ENCODE measurements at regions of chr13 and their contacts with region 1.

Region 1: DNA sequence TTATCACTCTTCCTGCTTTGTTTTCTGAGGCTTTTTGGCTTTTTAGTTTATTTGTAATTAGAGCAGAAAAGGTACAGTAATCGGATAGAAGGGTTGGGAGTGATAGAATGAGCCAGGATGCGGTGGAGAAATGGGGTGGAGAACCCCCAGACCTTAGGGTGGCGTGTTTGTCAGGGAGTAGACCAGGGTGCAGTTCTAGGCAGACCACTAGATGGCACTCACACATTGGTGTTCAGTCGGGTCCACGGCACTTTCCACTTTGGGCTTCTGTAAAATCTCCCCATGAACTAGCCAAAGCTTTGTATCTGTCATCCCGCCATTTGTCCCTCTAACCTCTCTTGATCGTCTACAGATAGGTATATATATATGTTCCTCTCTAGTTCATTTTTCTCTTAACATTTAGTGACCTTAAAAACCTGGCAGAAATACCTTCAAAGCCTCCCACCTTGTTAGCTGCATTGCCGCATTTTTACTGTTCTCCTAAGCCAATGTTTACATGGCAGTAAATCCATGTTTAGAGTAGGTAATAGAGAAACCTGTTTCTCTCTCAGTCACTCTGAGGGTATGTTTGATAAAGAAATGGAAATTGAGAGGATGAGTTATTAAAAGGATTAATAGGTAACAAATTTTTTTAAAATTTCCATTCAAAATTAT is 154.9 kb downstream of the TM9SF2 start:
- DNase-seq: peak; percentile 85
- H3K4me3 ChIP-seq: no peak overlapping the region
- H3K27ac ChIP-seq: no peak overlapping the region
- H3K4me1 ChIP-seq: peaks cover 0 to 11% (median 8%) of the 10 kb centered on the region in 4 donors
- H3K27me3 ChIP-seq: no peaks in the 10 kb centered on the region
- CTCF ChIP-seq: peak; percentile 78 to 92 (median 85)
- EP300 ChIP-seq: no peak
- POLR2A ChIP-seq: no peak

Region 2: DNA sequence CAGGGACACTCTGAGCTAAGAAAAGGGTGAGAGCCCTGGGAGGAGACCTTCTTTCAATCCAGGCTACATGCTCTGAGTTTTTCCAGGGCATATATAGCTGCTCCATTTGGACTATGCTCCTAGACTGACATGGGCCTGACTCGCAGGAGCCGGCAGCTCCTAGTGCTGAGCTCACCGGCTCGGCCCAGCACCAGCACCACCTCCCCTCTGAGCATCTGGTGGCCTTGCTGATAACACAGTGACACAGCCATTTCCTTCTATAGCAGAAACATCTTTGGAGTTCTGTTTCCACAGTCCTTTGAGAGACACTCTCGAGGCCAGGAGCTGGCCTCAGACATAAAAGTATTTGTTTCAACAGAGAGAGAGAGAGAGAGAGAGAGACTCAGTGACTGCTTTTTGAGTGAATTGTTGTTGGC is 29.9 kb after region 1 on chr13:
- intact Hi-C with region 1: no loop called
- DNase-seq: no peak
- H3K4me3 ChIP-seq: no peak overlapping the region
- H3K27ac ChIP-seq: no peak overlapping the region
- H3K4me1 ChIP-seq: peaks cover 0 to 9% (median 0%) of the 10 kb centered on the region in 4 donors
- H3K27me3 ChIP-seq: no peaks in the 10 kb centered on the region
- CTCF ChIP-seq: no peak
- EP300 ChIP-seq: no peak
- POLR2A ChIP-seq: no peak

Region 3: DNA sequence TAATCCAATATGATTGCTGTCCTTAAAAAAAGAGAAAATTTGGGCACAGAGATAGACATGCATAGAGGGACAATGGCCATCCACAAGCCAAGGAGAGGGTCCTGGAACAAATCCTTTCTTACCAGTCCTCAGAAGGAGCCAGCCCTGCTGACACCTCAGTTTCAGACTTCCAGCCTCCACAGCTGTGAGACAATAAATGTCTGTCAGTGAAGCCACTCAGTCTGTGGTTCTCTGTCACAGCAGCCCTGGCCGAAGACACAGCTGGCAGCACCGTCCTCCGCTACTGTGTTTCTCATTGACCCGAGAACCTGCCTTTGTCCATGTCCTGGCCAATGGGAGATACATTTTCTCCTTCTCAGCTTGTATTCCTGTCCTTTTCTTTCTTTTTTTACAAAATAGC is 52.9 kb after region 1 on chr13:
- intact Hi-C with region 1: no loop called
- DNase-seq: no peak
- H3K4me3 ChIP-seq: no peak overlapping the region
- H3K27ac ChIP-seq: no peak overlapping the region
- H3K4me1 ChIP-seq: no peaks in the 10 kb centered on the region
- H3K27me3 ChIP-seq: no peaks in the 10 kb centered on the region
- CTCF ChIP-seq: no peak
- EP300 ChIP-seq: no peak
- POLR2A ChIP-seq: no peak

Region 4: GRCh38 chr13:99749271-99750019 is 93.2 kb after region 1 on chr13:
- intact Hi-C with region 1: no loop called
- DNase-seq: no peak
- H3K4me3 ChIP-seq: no peak overlapping the region
- H3K27ac ChIP-seq: no peak overlapping the region
- H3K4me1 ChIP-seq: no peaks in the 10 kb centered on the region
- H3K27me3 ChIP-seq: no peaks in the 10 kb centered on the region
- CTCF ChIP-seq: no peak
- EP300 ChIP-seq: no peak
- POLR2A ChIP-seq: no peak

Region 5: DNA sequence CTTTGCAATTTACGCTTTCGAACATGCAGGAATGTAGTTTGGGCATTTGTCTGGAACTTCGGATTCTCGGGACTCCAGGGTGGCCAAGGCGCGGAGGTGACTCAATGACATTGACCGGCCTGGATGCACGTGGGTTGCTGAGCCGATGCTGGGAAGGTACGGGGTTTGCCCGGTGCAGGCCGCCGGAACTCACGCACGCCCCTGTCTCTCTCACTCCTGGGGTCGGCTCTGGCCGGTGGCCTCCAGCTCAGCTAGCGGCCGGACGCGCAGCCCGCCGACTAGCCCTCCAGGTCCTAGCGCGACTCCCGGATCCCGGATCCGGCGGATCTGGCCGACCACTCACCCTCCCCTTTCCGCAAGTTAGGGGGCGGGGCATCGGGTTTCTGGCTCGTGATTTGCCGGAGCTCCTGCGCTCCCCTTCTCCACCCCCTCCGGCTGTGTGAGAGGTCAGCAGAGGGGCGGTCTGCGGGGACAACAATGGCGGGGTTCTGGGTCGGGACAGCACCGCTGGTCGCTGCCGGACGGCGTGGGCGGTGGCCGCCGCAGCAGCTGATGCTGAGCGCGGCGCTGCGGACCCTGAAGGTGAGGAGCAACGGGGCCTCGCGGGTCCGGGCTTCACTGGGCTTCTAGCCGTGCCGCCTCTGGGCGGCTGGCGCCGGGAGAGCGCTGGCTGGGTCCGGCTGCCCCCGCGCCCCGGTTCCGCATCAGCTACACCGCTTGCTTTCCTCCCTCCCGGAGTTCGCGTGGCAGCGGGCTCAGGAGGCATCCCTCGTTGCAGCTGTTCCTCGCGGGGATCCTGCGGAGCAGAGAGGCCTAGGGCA is 432.6 kb after region 1 on chr13 and contains the start of gene PCCA:
- intact Hi-C with region 1: loop called (anchors 2 kb)
- DNase-seq: peak; percentile 97
- H3K4me3 ChIP-seq: peak within 1 kb of the TSS; percentile 75 to 90 (median 77)
- H3K27ac ChIP-seq: peak within 1 kb of the TSS; percentile 79 to 87 (median 82)
- H3K4me1 ChIP-seq: peaks cover 0 to 30% (median 23%) of the 10 kb centered on the region in 4 donors
- H3K27me3 ChIP-seq: no peaks in the 10 kb centered on the region
- CTCF ChIP-seq: no peak
- EP300 ChIP-seq: peak in 1 of 4 donors; percentile 44
- POLR2A ChIP-seq: peak in 1 of 2 donors; percentile 42
- total RNA-seq, gene PCCA: 42.8 to 45.6 (median 45.2) TPM

Region 6: DNA sequence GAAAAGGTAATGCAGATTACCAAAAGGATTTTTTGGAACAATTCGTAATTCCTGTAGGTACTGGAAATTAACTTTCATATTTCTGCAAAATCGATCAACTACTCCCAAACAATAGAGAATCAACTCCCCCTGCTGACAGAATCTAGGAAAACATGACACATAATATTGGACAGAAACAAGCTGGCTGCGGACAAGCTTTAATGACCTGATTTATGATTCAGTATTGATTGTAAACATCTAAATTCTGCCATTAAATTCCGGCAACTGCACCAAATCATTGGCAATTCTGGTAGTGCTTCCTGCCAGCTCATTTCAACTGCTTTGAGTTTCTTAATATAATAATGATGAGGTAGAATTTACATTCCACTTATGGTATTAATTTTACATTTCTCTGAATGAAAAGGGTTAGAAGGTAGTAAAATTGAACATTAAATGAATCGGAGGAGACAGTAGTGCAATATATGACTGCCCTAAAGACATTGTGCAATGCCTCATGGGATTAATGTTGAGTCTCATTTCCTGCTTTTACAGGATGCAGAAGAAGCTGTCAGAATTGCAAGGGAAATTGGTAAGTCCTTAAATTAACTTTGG is 579.2 kb after region 1 on chr13:
- intact Hi-C with region 1: loop called (anchors 2 kb)
- DNase-seq: no peak
- H3K4me3 ChIP-seq: no peak overlapping the region
- H3K27ac ChIP-seq: no peak overlapping the region
- H3K4me1 ChIP-seq: peaks cover 0 to 6% (median 5%) of the 10 kb centered on the region in 4 donors
- H3K27me3 ChIP-seq: no peaks in the 10 kb centered on the region
- CTCF ChIP-seq: peak in 3 of 4 experiments; percentile 17 to 36 (median 29)
- EP300 ChIP-seq: no peak
- POLR2A ChIP-seq: no peak

Region 7: DNA sequence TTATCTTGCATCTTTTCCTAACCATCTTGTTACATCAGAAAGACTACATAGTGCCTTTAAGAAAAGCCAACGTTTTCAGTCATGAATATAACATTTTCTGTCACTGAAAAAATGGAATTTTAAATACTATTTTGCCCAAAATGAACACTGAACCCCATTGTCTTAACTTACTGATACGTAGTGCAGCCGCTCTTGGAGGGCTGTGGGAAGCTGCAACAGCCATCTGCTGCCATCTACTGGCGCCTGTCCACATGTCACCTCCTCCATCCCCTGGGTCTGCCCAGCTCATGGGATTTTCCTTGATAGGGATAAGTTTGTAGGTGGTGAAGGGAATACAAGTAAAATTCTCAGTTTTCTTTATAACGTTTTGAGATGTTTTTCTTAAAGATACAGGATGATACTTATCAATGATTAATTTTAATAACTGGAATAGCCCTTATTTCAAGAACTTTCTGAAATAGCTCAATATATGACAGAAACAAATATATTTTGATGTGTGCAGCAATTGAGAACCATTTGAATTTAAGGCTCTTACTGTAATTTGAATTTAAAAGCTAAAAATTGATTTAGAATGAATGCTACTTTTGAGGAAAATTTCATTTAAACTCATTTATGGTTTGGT is 858.7 kb after region 1 on chr13:
- intact Hi-C with region 1: loop called (anchors 2 kb)
- DNase-seq: peak; percentile 87
- H3K4me3 ChIP-seq: no peak overlapping the region
- H3K27ac ChIP-seq: no peak overlapping the region
- H3K4me1 ChIP-seq: peaks cover 0 to 9% (median 0%) of the 10 kb centered on the region in 4 donors
- H3K27me3 ChIP-seq: no peaks in the 10 kb centered on the region
- CTCF ChIP-seq: peak; percentile 47 to 92 (median 76)
- EP300 ChIP-seq: no peak
- POLR2A ChIP-seq: no peak

Measured in sigmoid colon (tissue), 7 donors.